Activated CD4-positive, alpha-beta T cell treated with anti-CD3 and anti-CD28 coated beads for 36 hours (primary cell): ENCODE measurements at regions of chr2 and their contacts with region 1.

Region 1: GRCh38 chr2:134897932-134898331 is 20.7 kb upstream of the CCNT2 start:
- DNase-seq: no peak
- ATAC-seq: no peak
- H3K4me3 Mint-ChIP-seq: no peak overlapping the region
- H3K27ac Mint-ChIP-seq: no peak overlapping the region
- H3K4me1 Mint-ChIP-seq: no peaks in the 10 kb centered on the region
- H3K27me3 Mint-ChIP-seq: no peaks in the 10 kb centered on the region

Region 2: GRCh38 chr2:134391751-134392160 is 506.2 kb before region 1 on chr2:
- CTCF ChIA-PET with region 1: no interaction called
- POLR2A ChIA-PET with region 1: no interaction called
- intact Hi-C with region 1: no loop called
- DNase-seq: no peak
- ATAC-seq: peak; percentile 74
- H3K4me3 Mint-ChIP-seq: no peak overlapping the region
- H3K27ac Mint-ChIP-seq: no peak overlapping the region
- H3K4me1 Mint-ChIP-seq: peaks cover 19% of the 10 kb centered on the region
- H3K27me3 Mint-ChIP-seq: no peaks in the 10 kb centered on the region

Region 3: GRCh38 chr2:134452042-134452733 is 445.7 kb before region 1 on chr2:
- CTCF ChIA-PET with region 1: interaction called, 3 read pairs
- POLR2A ChIA-PET with region 1: no interaction called
- intact Hi-C with region 1: loop called (anchors 1 to 2 kb)
- DNase-seq: no peak
- ATAC-seq: no peak
- H3K4me3 Mint-ChIP-seq: no peak overlapping the region
- H3K27ac Mint-ChIP-seq: no peak overlapping the region
- H3K4me1 Mint-ChIP-seq: no peaks in the 10 kb centered on the region
- H3K27me3 Mint-ChIP-seq: no peaks in the 10 kb centered on the region

Region 4: DNA sequence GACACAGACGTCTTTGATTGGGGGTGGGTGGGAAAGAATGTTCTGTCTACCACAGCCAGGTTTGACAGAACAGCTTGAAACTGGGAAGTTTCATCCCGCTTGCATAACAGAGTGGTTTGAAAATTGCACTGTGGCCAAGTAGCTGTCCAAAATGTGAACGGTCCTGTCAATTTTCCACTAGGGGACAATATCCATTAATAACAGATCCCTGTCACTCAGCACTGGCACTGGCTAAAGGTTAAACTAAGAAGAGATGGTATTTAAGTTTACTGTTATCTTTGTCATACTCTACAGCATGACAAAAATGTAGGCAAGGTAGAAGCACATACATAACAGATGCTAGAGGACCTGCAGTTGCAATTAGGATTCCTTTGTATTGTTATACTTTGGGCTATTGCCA is 115.1 kb before region 1 on chr2:
- CTCF ChIA-PET with region 1: interaction called, 4 read pairs
- POLR2A ChIA-PET with region 1: no interaction called
- intact Hi-C with region 1: loop called (anchors 1 to 5 kb)
- DNase-seq: peak; percentile 18
- ATAC-seq: peak; percentile 39
- H3K4me3 Mint-ChIP-seq: no peak overlapping the region
- H3K27ac Mint-ChIP-seq: no peak overlapping the region
- H3K4me1 Mint-ChIP-seq: peaks cover 8% of the 10 kb centered on the region
- H3K27me3 Mint-ChIP-seq: peaks cover 4% of the 10 kb centered on the region

Region 5: DNA sequence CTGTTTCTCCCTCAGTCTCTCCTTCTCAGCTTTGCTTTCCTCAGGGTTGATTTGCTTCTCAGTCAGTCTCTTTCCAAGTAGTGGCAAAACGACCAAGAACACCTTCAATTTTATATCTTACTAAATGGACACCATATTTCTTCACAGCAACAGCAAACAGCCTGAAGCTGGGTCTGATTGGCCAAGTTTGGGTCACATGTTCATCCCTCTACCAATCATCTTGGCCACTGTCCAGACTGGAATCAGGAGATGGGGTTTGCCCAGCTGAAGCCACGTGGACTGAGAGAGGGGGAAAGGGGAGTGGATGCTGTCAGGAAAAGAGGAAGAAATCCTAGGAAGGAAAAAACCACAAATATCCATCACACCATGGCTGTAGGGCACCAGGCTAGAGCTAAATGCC is 101.6 kb before region 1 on chr2:
- CTCF ChIA-PET with region 1: no interaction called
- POLR2A ChIA-PET with region 1: no interaction called
- intact Hi-C with region 1: no loop called
- DNase-seq: no peak
- ATAC-seq: no peak
- H3K4me3 Mint-ChIP-seq: no peak overlapping the region
- H3K27ac Mint-ChIP-seq: no peak overlapping the region
- H3K4me1 Mint-ChIP-seq: no peaks in the 10 kb centered on the region
- H3K27me3 Mint-ChIP-seq: peaks cover 5% of the 10 kb centered on the region

Region 6: DNA sequence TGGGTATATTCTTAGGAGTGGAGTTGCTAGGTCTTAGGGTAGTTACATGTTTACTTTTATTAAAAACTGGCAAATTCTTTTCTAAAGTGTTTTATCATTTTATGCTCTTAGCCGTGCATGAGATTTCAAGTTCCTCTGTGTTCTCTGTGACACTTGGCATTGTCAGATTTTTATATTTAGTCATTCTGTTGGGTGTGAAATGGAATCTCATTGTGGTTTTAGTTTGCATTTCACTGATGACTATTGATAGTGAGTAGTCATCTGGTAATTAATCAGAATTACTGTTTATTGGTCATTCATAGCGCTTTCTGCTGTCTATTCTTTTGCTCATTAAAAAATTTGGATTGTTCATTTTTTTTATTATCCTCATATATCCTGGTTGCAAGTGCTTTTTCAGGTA is 188.3 kb after region 1 on chr2:
- CTCF ChIA-PET with region 1: no interaction called
- POLR2A ChIA-PET with region 1: no interaction called
- intact Hi-C with region 1: no loop called
- DNase-seq: no peak
- ATAC-seq: peak; percentile 72
- H3K4me3 Mint-ChIP-seq: no peak overlapping the region
- H3K27ac Mint-ChIP-seq: no peak overlapping the region
- H3K4me1 Mint-ChIP-seq: peaks cover 29% of the 10 kb centered on the region
- H3K27me3 Mint-ChIP-seq: no peaks in the 10 kb centered on the region